CD4-positive, alpha-beta memory T cell (primary cell): ENCODE measurements at regions of chr17 and their contacts with region 1.

Region 1: DNA sequence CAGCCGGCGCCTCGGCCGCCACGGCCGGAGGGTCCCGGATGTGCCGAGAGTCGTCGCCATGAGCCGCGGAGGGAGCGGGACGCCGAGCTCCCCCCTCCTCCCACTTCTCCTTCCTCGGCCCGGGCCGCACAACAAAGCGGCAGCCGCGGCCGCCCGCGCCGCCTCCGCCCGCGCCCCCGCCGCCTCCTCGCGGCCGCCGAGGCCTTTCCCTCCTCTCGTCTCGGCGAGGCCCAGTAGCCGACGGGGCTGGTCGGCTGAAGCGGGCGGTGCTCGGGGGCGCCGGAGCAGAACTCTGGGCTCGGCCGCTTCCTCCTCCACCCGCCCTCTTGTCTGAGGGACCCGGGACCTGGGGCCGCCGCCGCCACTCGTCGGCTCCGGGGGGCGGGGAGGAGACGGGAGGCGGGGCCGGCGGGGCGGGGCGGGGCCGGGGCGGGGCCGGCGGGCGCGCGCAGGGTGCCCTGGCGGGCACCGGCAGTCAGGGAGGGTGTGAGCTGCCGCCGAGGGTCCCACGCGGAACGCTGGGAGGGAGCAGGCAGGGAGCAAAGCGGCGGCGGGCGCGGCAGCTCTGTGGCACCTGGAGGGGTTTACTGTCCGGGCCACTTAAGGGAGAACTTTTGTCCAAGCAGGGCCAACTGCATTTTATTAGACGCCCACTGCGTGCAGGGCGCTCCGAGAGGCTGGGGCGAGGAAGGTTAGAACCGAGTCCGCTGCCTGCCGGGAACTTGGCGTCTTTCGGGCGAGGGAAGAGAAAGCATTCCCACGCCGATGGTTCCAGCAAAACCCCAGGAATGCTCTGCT is at the start of gene SMURF2:
- DNase-seq: peak; percentile 81 to 85 (median 83)
- H3K4me3 ChIP-seq: peak within 1 kb of the TSS; percentile 61 to 82
- H3K4me3 Mint-ChIP-seq: peak within 1 kb of the TSS; percentile 97 to 99 (median 99)
- H3K27ac ChIP-seq: peak within 1 kb of the TSS; percentile 54
- H3K27ac Mint-ChIP-seq: peak within 1 kb of the TSS; percentile 95 to 98 (median 97)
- H3K4me1 ChIP-seq: peaks cover 39% of the 10 kb centered on the region
- H3K4me1 Mint-ChIP-seq: peaks cover 21 to 40% (median 31%) of the 10 kb centered on the region in 4 donors
- H3K27me3 ChIP-seq: no peaks in the 10 kb centered on the region
- H3K27me3 Mint-ChIP-seq: no peaks in the 10 kb centered on the region
- total RNA-seq, gene SMURF2: 32.8 to 35.0 TPM

Region 2: DNA sequence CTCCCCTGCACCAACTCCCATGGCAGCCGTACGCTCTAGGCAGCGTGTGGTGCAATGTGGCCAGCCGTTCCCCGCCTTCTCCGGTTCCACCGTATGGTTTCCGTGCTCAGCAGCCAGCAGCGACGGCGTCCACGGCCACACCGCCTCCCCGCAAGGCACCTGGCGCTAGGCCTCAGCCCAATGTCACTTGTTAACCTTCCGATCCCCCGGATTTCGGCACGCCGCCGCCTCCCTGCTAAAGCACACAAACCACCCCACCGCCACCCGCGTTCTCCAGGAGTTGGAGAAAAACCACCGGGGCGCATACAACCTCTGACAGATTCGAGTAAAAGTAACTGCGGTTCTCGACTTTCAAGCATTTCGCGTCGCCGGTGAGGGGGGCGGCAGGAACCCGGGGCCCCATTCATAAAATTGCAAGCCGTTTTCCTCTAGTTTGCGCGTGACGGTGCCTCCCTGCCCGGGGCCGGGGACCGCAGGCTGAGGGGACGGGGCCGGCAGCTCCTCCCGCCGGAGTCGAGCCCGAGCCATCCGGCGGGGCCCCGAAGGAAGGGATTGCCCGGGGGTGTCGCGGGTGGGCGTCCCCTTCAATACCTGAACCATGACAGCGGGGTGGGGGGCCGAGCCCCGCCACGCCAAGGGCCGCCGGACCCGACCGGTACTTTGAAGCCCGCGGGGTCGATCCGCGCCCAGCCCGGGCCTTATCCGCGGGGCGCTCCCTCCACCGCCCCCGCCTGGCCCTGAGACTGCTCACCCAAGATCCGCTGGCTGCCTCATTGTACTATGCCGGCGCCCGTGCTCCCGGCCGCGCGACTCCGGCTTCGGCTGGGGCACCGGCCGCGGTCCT is 399.5 kb before region 1 on chr17 and contains the start of gene TEX2:
- CTCF ChIA-PET with region 1: no interaction called
- POLR2A ChIA-PET with region 1: no interaction called
- intact Hi-C with region 1: loop called (anchors 10 kb)
- DNase-seq: peak; percentile 70 to 86 (median 73)
- H3K4me3 ChIP-seq: peak within 1 kb of the TSS; percentile 76 to 79
- H3K4me3 Mint-ChIP-seq: peak within 1 kb of the TSS; percentile 91 to 98 (median 95)
- H3K27ac ChIP-seq: peak within 1 kb of the TSS; percentile 74
- H3K27ac Mint-ChIP-seq: peak within 1 kb of the TSS; percentile 93 to 98 (median 96)
- H3K4me1 ChIP-seq: peaks cover 33% of the 10 kb centered on the region
- H3K4me1 Mint-ChIP-seq: peaks cover 21 to 46% (median 34%) of the 10 kb centered on the region in 4 donors
- H3K27me3 ChIP-seq: no peaks in the 10 kb centered on the region
- H3K27me3 Mint-ChIP-seq: peaks cover 0 to 9% of the 10 kb centered on the region in 2 donors
- total RNA-seq, gene TEX2: 12.6 to 13.1 TPM

Region 3: GRCh38 chr17:64682261-64683181 is 20.3 kb after region 1 on chr17:
- CTCF ChIA-PET with region 1: no interaction called
- POLR2A ChIA-PET with region 1: no interaction called
- intact Hi-C with region 1: no loop called
- DNase-seq: no peak
- H3K4me3 ChIP-seq: no peak overlapping the region
- H3K4me3 Mint-ChIP-seq: no peak overlapping the region
- H3K27ac ChIP-seq: no peak overlapping the region
- H3K27ac Mint-ChIP-seq: peak overlapping the region in 1 of 7 donors; percentile 7
- H3K4me1 ChIP-seq: no peaks in the 10 kb centered on the region
- H3K4me1 Mint-ChIP-seq: no peaks in the 10 kb centered on the region
- H3K27me3 ChIP-seq: no peaks in the 10 kb centered on the region
- H3K27me3 Mint-ChIP-seq: no peaks in the 10 kb centered on the region

Region 4: GRCh38 chr17:64707019-64707591 is 44.9 kb after region 1 on chr17:
- CTCF ChIA-PET with region 1: no interaction called
- POLR2A ChIA-PET with region 1: interaction called, 25 read pairs
- intact Hi-C with region 1: no loop called
- DNase-seq: no peak
- H3K4me3 ChIP-seq: no peak overlapping the region
- H3K4me3 Mint-ChIP-seq: peak overlapping the region in 3 of 8 donors; percentile 22 to 43 (median 27)
- H3K27ac ChIP-seq: no peak overlapping the region
- H3K27ac Mint-ChIP-seq: peak overlapping the region in 3 of 7 donors; percentile 2 to 64 (median 12)
- H3K4me1 ChIP-seq: peaks cover 51% of the 10 kb centered on the region
- H3K4me1 Mint-ChIP-seq: peaks cover 40 to 54% (median 45%) of the 10 kb centered on the region in 4 donors
- H3K27me3 ChIP-seq: no peaks in the 10 kb centered on the region
- H3K27me3 Mint-ChIP-seq: no peaks in the 10 kb centered on the region